Activated naive CD4-positive, alpha-beta T cell treated with anti-CD3 and anti-CD28 coated beads for 36 hours (primary cell): ENCODE measurements at regions of chr15 and their contacts with region 1.

Region 1: DNA sequence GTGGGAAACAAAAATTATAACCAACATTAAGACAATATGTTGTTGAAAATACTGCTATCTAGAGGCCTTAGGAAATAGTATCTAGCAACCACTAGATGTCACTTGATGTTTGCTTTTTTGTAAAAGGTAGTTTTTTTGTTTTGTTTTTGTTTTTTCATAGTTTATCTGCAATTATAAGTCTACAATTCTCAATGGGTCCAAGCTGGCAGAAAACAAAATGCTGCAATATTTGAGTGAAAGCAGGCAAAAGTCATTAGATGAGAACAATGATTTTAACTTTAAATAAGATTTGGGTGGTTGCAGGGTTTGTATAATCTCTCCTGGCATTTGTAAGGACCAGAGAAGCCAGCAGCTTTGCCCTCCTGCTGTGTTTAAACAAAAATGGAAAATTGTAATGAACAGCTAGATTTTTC is 27.0 kb downstream of the DUT start:
- DNase-seq: no peak
- H3K4me3 Mint-ChIP-seq: no peak overlapping the region
- H3K27ac Mint-ChIP-seq: no peak overlapping the region
- H3K4me1 Mint-ChIP-seq: peaks cover 4% of the 10 kb centered on the region
- H3K27me3 Mint-ChIP-seq: no peaks in the 10 kb centered on the region

Region 2: GRCh38 chr15:48855501-48856440 is 497.5 kb after region 1 on chr15:
- CTCF ChIA-PET with region 1: no interaction called
- intact Hi-C with region 1: loop called (anchors 5 kb)
- DNase-seq: no peak
- H3K4me3 Mint-ChIP-seq: no peak overlapping the region
- H3K27ac Mint-ChIP-seq: no peak overlapping the region
- H3K4me1 Mint-ChIP-seq: no peaks in the 10 kb centered on the region
- H3K27me3 Mint-ChIP-seq: peaks cover 2% of the 10 kb centered on the region